Activated CD8-positive, alpha-beta T cell treated with anti-CD3 and anti-CD28 coated beads, Interleukin-2, amount 10 ng/mL, durations not matched to agents 7 days and 5 days (primary cell): ENCODE measurements at regions of chr1 and their contacts with region 1.

Region 1: GRCh38 chr1:225454733-225455132 is 26.9 kb upstream of the LBR start:
- DNase-seq: no peak
- ATAC-seq: peak; percentile 81
- H3K4me3 Mint-ChIP-seq: no peak overlapping the region
- H3K27ac Mint-ChIP-seq: no peak overlapping the region
- H3K4me1 Mint-ChIP-seq: peaks cover 40% of the 10 kb centered on the region
- H3K27me3 Mint-ChIP-seq: no peaks in the 10 kb centered on the region

Region 2: DNA sequence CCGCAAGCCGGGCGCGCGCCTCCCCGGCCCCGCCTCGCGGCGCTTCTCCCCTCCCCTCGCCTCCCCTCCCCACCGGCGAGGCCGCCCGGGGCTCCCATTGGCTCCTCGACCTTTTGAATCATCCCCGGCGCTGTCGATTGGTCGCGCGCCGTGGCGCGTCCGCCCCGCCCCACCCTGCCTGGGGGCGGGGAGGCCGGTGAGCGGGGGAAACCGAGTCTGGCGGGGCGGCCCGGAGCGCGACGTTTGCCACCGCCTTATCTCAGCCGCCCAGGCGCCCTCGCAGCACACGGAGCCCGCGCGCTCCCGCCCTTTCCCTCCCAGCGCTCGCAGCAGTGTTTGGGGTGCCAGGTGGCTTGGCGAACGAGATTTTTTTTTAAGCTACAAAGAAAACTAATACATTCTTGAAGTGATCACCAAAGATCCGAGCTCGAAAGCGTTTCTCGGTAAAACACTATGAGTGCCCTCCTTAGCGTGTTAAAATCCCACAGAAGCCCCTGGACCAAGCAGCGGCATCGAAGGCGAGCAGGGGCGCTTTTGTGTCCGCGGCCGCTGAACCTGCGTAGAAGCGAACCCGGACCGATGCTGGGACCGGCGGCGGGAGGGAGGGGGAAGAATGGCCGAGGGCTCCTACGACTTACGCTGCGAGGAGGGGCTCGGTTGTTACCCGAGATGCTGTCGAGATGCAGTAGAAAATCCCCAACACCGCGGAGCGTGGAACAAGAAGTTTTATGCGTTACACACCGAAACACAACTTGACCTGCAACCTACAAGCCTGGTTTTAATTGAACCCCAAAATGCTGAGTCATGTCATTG is 26.5 kb before region 1 on chr1:
- CTCF ChIA-PET with region 1: interaction called, 6 read pairs
- POLR2A ChIA-PET with region 1: interaction called, 10 read pairs
- DNase-seq: peak; percentile 94
- ATAC-seq: peak; percentile 92
- H3K4me3 Mint-ChIP-seq: peak overlapping the region; percentile 90
- H3K27ac Mint-ChIP-seq: peak overlapping the region; percentile 95
- H3K4me1 Mint-ChIP-seq: peaks cover 48% of the 10 kb centered on the region
- H3K27me3 Mint-ChIP-seq: no peaks in the 10 kb centered on the region

Region 3: DNA sequence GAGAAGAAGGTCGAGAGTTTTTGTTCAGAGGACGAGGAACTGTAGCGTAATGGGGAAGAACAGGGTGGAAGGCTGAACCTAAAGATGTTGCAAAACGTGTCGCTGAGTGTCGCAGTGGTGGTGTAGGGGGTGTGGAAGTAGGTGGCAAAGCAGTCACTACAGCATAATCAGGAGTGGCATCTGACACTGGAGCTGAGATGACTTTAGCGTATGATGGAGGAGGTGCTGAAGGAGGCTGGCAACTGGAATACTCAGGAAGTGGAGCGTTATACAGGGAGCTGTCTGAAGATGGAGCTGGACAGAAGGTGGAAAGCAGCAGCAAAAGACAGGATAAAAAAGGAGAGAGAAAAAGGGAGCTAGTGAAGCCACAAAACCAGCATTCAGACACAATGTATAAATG is 63.0 kb after region 1 on chr1:
- CTCF ChIA-PET with region 1: no interaction called
- POLR2A ChIA-PET with region 1: no interaction called
- DNase-seq: no peak
- ATAC-seq: no peak
- H3K4me3 Mint-ChIP-seq: no peak overlapping the region
- H3K27ac Mint-ChIP-seq: no peak overlapping the region
- H3K4me1 Mint-ChIP-seq: no peaks in the 10 kb centered on the region
- H3K27me3 Mint-ChIP-seq: peaks cover 17% of the 10 kb centered on the region

Region 4: DNA sequence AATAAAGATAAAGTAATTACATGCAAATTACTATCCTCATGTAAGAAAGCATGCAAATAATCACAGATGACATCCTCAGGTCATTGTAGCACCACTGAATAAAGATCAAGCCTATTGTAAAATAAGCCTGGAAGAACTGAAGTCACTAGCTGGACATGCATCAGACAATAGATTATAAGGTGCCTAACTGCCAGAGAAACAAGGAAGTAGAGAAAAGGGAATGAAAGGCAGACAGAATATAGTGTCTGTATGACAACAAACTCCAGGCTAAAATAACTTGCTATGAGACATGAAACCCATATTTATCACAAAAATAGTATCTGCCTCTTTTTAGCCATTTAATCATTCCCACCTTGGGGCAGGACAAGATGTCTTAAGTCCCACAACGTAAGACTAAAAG is 89.5 kb after region 1 on chr1:
- CTCF ChIA-PET with region 1: no interaction called
- POLR2A ChIA-PET with region 1: no interaction called
- DNase-seq: no peak
- ATAC-seq: no peak
- H3K4me3 Mint-ChIP-seq: no peak overlapping the region
- H3K27ac Mint-ChIP-seq: no peak overlapping the region
- H3K4me1 Mint-ChIP-seq: peaks cover 16% of the 10 kb centered on the region
- H3K27me3 Mint-ChIP-seq: peaks cover 3% of the 10 kb centered on the region